Caco-2 (cell line): ENCODE measurements at regions of chr3 and their contacts with region 1.

Region 1: GRCh38 chr3:176939022-176939817 is 258.1 kb downstream of the TBL1XR1 start:
- DNase-seq: peak; percentile 41 to 68
- H3K4me3 ChIP-seq: no peak overlapping the region
- H3K4me3 Mint-ChIP-seq: no peak overlapping the region
- H3K27ac Mint-ChIP-seq: no peak overlapping the region
- H3K4me1 ChIP-seq: no peaks in the 10 kb centered on the region
- H3K4me1 Mint-ChIP-seq: no peaks in the 10 kb centered on the region
- H3K27me3 ChIP-seq: no peaks in the 10 kb centered on the region
- H3K27me3 Mint-ChIP-seq: no peaks in the 10 kb centered on the region
- CTCF ChIP-seq: peak; percentile 58 to 75

Region 2: GRCh38 chr3:175957002-175957401 is 982.2 kb before region 1 on chr3:
- CTCF ChIA-PET with region 1: no interaction called
- POLR2A ChIA-PET with region 1: no interaction called
- intact Hi-C with region 1: loop called (anchors 2 kb)
- DNase-seq: peak in 1 of 2 experiments; percentile 41
- H3K4me3 ChIP-seq: no peak overlapping the region
- H3K4me3 Mint-ChIP-seq: no peak overlapping the region
- H3K27ac Mint-ChIP-seq: no peak overlapping the region
- H3K4me1 ChIP-seq: no peaks in the 10 kb centered on the region
- H3K4me1 Mint-ChIP-seq: peaks cover 9% of the 10 kb centered on the region
- H3K27me3 ChIP-seq: no peaks in the 10 kb centered on the region
- H3K27me3 Mint-ChIP-seq: no peaks in the 10 kb centered on the region
- CTCF ChIP-seq: peak; percentile 26 to 42

Region 3: DNA sequence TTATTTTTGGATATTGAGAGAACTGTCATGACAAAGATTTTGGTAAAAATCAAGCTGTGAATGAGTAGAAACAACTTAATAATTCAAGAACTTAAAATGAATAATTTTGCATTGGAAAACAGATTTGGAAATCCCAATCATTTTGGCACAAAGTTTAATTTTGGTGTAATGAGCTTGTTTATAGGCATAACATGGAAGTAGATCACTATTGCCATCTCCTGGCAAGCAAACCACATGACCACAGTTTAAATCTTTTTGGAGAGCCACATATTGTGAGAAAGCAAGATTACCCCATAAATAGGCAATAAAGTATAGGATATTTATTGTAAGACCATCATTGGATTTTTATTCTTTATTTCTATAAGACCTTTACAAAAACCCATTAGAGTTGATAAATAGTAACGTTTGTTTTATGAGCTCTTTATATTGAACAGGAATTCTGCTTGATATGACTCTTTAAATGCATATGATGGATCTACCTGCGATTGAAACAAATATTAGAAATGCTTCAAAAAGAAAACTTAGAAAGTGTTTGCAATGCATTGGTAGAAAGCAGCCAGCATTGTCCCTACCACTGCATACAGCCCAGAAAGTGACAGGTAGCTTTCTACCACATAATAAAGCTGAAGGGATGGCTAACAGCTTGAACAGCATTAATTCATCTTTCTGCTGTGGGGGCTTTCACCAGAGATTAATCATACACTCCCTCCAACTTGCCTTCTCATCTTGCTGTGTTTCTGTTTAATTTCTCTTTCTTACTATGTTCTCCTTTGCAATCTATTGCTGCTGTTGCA is 508.8 kb before region 1 on chr3:
- CTCF ChIA-PET with region 1: interaction called, 5 read pairs
- POLR2A ChIA-PET with region 1: no interaction called
- intact Hi-C with region 1: loop called (anchors 1 kb)
- DNase-seq: peak in 1 of 2 experiments; percentile 33
- H3K4me3 ChIP-seq: no peak overlapping the region
- H3K4me3 Mint-ChIP-seq: no peak overlapping the region
- H3K27ac Mint-ChIP-seq: no peak overlapping the region
- H3K4me1 ChIP-seq: peaks cover 11% of the 10 kb centered on the region; the same call in 1 of the 2 replicates
- H3K4me1 Mint-ChIP-seq: no peaks in the 10 kb centered on the region
- H3K27me3 ChIP-seq: no peaks in the 10 kb centered on the region
- H3K27me3 Mint-ChIP-seq: no peaks in the 10 kb centered on the region
- CTCF ChIP-seq: peak; percentile 58 to 59

Region 4: GRCh38 chr3:176514297-176514696 is 424.9 kb before region 1 on chr3:
- CTCF ChIA-PET with region 1: interaction called, 3 read pairs
- POLR2A ChIA-PET with region 1: no interaction called
- intact Hi-C with region 1: loop called (anchors 1 kb)
- DNase-seq: peak in 1 of 2 experiments; percentile 37
- H3K4me3 ChIP-seq: no peak overlapping the region
- H3K4me3 Mint-ChIP-seq: no peak overlapping the region
- H3K27ac Mint-ChIP-seq: no peak overlapping the region
- H3K4me1 ChIP-seq: no peaks in the 10 kb centered on the region
- H3K4me1 Mint-ChIP-seq: no peaks in the 10 kb centered on the region
- H3K27me3 ChIP-seq: no peaks in the 10 kb centered on the region
- H3K27me3 Mint-ChIP-seq: no peaks in the 10 kb centered on the region
- CTCF ChIP-seq: peak; percentile 27 to 44

Region 5: DNA sequence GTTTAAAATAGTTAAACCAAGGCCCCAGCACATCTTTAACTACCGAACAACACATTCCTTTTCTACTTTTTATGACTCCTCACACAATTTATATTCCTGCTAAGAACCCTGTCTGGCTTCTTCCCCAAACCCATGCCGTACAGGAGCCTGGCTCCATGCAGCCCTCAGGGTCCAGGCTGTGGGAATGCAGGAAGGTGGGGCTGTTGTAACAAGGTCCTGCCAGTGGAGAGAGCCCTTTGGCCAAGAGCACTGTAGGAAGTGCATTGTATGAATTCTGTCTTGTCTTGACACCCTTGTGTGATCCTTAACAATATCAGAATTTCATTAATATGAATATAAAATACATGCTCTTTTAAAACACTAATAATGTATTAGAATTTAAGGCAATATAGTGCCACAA is 305.7 kb before region 1 on chr3:
- CTCF ChIA-PET with region 1: no interaction called
- POLR2A ChIA-PET with region 1: no interaction called
- intact Hi-C with region 1: loop called (anchors 1 kb)
- DNase-seq: peak; percentile 12 to 42
- H3K4me3 ChIP-seq: no peak overlapping the region
- H3K4me3 Mint-ChIP-seq: no peak overlapping the region
- H3K27ac Mint-ChIP-seq: no peak overlapping the region
- H3K4me1 ChIP-seq: no peaks in the 10 kb centered on the region
- H3K4me1 Mint-ChIP-seq: no peaks in the 10 kb centered on the region
- H3K27me3 ChIP-seq: no peaks in the 10 kb centered on the region
- H3K27me3 Mint-ChIP-seq: no peaks in the 10 kb centered on the region
- CTCF ChIP-seq: peak in 1 of 2 experiments; percentile 5

Region 6: GRCh38 chr3:176663837-176664831 is 275.1 kb before region 1 on chr3:
- CTCF ChIA-PET with region 1: no interaction called
- POLR2A ChIA-PET with region 1: no interaction called
- intact Hi-C with region 1: loop called (anchors 1 kb)
- DNase-seq: peak in 1 of 2 experiments; percentile 9
- H3K4me3 ChIP-seq: no peak overlapping the region
- H3K4me3 Mint-ChIP-seq: no peak overlapping the region
- H3K27ac Mint-ChIP-seq: no peak overlapping the region
- H3K4me1 ChIP-seq: no peaks in the 10 kb centered on the region
- H3K4me1 Mint-ChIP-seq: no peaks in the 10 kb centered on the region
- H3K27me3 ChIP-seq: no peaks in the 10 kb centered on the region
- H3K27me3 Mint-ChIP-seq: no peaks in the 10 kb centered on the region
- CTCF ChIP-seq: peak; percentile 24 to 32

Region 7: GRCh38 chr3:176872771-176873209 is 66.4 kb before region 1 on chr3:
- CTCF ChIA-PET with region 1: interaction called, 38 read pairs
- POLR2A ChIA-PET with region 1: no interaction called
- intact Hi-C with region 1: loop called (anchors 1 kb)
- DNase-seq: peak; percentile 57 to 58
- H3K4me3 ChIP-seq: no peak overlapping the region
- H3K4me3 Mint-ChIP-seq: no peak overlapping the region
- H3K27ac Mint-ChIP-seq: no peak overlapping the region
- H3K4me1 ChIP-seq: no peaks in the 10 kb centered on the region
- H3K4me1 Mint-ChIP-seq: no peaks in the 10 kb centered on the region
- H3K27me3 ChIP-seq: no peaks in the 10 kb centered on the region
- H3K27me3 Mint-ChIP-seq: no peaks in the 10 kb centered on the region
- CTCF ChIP-seq: peak; percentile 71 to 73

Region 8: GRCh38 chr3:177013681-177014280 is 74.6 kb after region 1 on chr3:
- CTCF ChIA-PET with region 1: no interaction called
- POLR2A ChIA-PET with region 1: no interaction called
- intact Hi-C with region 1: no loop called
- DNase-seq: no peak
- H3K4me3 ChIP-seq: no peak overlapping the region
- H3K4me3 Mint-ChIP-seq: no peak overlapping the region
- H3K27ac Mint-ChIP-seq: no peak overlapping the region
- H3K4me1 ChIP-seq: no peaks in the 10 kb centered on the region
- H3K4me1 Mint-ChIP-seq: no peaks in the 10 kb centered on the region
- H3K27me3 ChIP-seq: no peaks in the 10 kb centered on the region
- H3K27me3 Mint-ChIP-seq: no peaks in the 10 kb centered on the region
- CTCF ChIP-seq: no peak